Right ventricle myocardium inferior (tissue), 1 donor: ENCODE measurements at regions of chr1 and their contacts with region 1.

Region 1: DNA sequence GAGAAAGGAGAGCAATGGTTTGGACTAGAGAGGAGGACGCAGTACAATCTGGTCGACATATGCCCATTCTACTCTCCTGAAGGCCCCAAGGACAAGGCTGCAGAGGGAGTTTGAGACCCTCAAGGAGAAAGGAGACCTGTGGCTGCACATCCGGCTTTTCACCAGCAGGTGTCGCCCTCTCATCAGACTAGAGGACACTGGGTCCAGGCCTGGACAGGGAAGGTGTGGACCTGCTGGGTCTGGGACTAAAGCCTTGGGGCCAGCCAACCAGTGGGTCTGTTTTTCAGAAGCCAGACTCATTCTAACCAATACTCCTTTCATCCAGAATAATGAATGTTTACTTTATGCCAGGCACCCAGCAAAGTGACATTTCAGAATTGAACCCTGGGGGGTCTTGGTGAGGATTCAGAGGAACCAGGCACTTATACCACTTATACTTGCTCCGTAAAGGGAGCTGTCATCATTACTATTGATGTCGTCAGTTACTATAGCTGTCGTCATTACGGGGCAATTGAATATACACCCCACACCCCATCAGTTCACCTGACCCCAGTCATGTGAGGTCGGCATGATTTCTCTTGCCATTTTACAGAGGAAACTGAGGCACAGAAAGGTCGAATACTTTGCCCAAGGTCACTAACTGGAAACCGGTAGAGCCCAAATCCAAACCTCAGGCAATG is 5.1 kb downstream of the SRARP start:
- DNase-seq: peak; percentile 85
- ATAC-seq: no peak

Region 2: DNA sequence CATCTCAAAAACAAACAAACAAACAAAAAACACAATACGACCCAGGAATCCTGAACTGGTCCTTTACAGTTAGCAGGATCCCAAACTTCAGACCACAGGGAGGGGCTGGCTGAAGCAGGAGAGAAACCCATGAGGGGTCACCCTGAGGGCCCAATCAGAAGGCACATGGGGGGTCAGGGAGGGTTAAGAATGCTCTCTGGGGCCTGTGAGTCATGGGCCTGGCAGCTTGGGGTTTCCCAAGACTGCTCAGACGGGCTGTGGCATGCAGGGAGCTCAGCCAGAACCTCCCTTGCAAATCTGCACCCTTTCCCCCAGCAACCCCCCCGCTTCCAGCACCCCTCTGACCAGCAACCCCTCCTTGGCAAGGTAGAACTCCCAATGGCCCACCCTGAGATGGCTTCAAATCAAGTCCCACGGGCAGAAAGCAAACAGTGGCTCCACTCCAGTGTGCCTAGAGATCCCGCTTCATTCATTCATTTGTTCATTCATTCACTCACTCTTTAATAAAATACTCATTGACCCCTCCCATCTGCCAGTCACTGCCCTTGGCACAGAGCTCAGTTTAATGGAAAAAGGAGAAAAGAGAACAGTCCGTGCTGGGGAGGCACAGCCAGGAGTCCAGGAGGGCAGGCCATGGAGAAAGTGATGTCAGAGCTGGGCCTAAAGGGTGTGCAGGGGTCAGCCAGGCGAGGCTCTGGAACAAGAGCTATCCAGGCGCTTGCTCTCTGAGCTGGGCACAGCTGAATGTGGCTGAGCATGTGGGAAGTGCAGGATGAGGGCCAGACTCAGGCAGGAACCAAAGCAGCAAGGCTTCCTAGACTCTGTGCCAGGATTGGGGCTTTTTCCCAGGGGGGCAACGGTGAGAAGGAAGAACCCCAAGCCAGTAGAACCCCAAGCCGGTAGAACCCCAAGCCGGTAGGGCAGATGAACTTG is 209.9 kb before region 1 on chr1:
- intact Hi-C with region 1: no loop called
- DNase-seq: peak; percentile 75
- ATAC-seq: peak; percentile 57

Region 3: GRCh38 chr1:16032388-16033103 is 23.4 kb after region 1 on chr1:
- intact Hi-C with region 1: loop called (anchors 2 kb)
- DNase-seq: peak; percentile 92
- ATAC-seq: peak; percentile 95

Region 4: DNA sequence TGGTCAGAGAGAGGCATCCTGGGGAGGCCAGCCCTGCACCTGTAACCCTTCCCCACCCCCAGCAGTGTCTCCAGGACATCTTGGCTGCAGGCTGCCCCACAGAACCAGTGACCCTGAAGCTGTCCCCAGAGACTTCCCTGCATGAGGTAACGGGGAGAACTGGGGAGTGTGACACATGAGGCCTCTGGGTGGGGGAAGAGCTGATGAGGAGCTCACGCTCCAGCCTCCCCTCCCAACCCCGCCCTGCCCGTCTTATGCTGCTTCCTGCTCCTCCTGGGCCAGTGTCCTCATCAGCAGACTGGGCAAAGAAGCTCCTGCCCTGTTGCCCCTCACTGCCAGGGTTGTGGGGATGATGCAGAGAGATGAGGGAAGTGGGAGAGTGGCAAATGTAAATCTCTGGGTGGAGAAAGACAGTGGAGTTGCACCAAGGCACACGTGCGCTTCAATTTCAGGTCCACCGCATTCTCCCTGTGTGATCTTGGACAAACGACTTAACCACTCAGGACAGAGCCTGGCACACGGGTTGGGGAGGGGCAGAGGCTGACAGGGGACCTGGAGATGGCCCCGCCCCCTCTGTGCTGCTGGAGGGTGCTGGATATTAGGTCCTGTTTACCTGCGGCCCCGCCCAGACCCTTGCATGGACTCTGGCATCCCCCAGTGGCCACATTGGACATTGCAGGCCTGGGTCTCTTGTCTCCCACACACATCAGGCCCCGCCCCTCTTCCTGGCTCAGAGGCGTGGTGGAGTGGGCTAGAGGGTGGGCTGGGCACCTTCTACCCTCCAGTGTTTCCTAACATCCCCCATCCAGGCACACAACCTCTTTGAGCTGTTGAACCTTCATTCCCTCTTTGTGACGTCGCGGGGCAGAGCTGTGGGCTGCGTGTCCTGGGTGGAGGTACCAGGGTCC is 46.7 kb after region 1 on chr1:
- intact Hi-C with region 1: loop called (anchors 1 kb)
- DNase-seq: peak; percentile 93
- ATAC-seq: peak; percentile 71